Activated naive CD4-positive, alpha-beta T cell treated with anti-CD3 and anti-CD28 coated beads for 36 hours (primary cell): ENCODE measurements at regions of chr15 and their contacts with region 1.

Region 1: GRCh38 chr15:89057504-89058133 is 30.6 kb upstream of the ABHD2 start:
- DNase-seq: peak; percentile 91
- H3K4me3 Mint-ChIP-seq: no peak overlapping the region
- H3K27ac Mint-ChIP-seq: no peak overlapping the region
- H3K4me1 Mint-ChIP-seq: peaks cover 11% of the 10 kb centered on the region
- H3K27me3 Mint-ChIP-seq: no peaks in the 10 kb centered on the region

Region 2: GRCh38 chr15:89071466-89071865 is 13.8 kb after region 1 on chr15:
- CTCF ChIA-PET with region 1: interaction called, 11 read pairs
- intact Hi-C with region 1: no loop called
- DNase-seq: no peak
- H3K4me3 Mint-ChIP-seq: no peak overlapping the region
- H3K27ac Mint-ChIP-seq: no peak overlapping the region
- H3K4me1 Mint-ChIP-seq: peaks cover 24% of the 10 kb centered on the region
- H3K27me3 Mint-ChIP-seq: no peaks in the 10 kb centered on the region

Region 3: GRCh38 chr15:89096664-89097063 is 39.0 kb after region 1 on chr15:
- CTCF ChIA-PET with region 1: interaction called, 75 read pairs
- intact Hi-C with region 1: no loop called
- DNase-seq: no peak
- H3K4me3 Mint-ChIP-seq: no peak overlapping the region
- H3K27ac Mint-ChIP-seq: no peak overlapping the region
- H3K4me1 Mint-ChIP-seq: peaks cover 45% of the 10 kb centered on the region
- H3K27me3 Mint-ChIP-seq: no peaks in the 10 kb centered on the region

Region 4: DNA sequence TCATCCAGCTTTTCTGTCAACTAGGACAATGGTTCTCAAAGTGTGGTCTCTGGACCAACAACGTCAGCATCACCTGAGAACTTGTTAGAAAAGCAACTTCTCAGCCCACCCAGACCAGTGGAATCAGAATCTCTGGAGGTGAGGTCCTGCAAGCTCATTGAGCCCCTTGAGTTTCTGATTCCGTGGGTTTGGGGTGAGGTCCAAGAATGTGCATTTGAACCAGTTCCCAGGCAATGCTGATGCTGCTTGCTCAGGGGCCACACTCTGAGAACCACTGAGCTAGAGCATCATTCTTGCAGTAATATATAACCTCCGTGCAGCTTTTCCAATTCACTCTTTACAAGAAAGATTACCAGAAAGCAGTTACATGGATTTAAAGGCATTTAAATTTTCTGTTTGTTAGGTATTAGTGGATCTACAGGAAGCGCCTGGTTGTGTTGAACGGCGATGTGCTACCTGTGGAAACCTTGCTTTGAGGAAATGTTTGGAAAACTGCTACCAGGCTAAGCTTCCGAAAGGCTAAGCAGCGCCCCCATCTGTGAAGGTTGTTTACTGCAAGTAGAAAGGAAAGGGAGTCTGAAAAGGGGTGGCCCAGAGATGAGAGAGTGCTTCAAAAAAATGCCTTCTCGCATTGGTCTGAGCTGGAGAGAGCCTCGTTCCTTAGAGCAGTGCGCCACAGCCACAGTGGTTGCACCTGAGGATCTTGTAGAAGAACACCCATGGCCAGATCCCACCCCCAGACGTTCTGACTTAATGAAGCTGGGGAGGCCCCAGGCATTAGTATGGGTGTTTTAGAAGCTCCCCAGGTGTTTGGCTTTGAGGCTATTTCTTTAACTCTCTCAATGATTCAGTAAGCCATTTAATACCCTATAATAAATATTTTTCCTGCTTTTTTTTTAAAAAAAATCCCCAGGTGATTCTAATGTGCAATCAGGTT is 113.8 kb after region 1 on chr15:
- CTCF ChIA-PET with region 1: interaction called, 105 read pairs
- intact Hi-C with region 1: no loop called
- DNase-seq: peak; percentile 68
- H3K4me3 Mint-ChIP-seq: no peak overlapping the region
- H3K27ac Mint-ChIP-seq: no peak overlapping the region
- H3K4me1 Mint-ChIP-seq: peaks cover 33% of the 10 kb centered on the region
- H3K27me3 Mint-ChIP-seq: no peaks in the 10 kb centered on the region

Region 5: DNA sequence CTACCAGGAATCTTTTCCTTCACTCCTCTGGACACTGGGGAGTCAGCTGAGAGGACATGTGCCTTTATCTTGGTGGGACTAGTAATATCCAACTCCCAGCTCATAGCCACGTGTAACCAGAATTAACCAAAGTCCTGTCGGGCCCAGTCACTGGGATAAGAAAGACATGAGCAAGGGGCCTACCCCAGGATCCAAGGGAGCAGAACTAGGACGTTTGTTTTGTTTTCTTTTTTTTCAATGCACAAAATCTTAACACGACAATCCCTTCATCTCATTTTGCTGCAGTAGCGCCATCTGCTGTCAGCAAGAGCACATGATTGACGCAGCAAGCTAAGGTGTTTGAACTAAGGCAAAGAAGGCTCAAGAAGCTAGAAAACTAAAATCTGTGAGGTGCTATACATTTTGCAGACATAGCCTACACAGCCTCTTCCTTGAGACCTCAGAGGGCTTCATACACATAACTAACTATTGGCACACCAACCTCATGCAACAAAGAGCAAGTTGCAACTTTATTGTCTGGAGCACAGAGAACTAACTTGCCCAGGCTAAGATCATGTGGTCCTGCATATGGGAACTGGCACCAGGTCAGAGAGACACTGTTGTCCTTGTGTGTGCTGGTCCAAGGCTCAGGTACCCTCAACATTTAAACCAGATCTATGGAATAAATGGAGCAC is 120.2 kb after region 1 on chr15:
- CTCF ChIA-PET with region 1: interaction called, 105 read pairs
- intact Hi-C with region 1: loop called (anchors 1 kb)
- DNase-seq: peak; percentile 86
- H3K4me3 Mint-ChIP-seq: no peak overlapping the region
- H3K27ac Mint-ChIP-seq: peak overlapping the region; percentile 94
- H3K4me1 Mint-ChIP-seq: peaks cover 46% of the 10 kb centered on the region
- H3K27me3 Mint-ChIP-seq: no peaks in the 10 kb centered on the region

Region 6: DNA sequence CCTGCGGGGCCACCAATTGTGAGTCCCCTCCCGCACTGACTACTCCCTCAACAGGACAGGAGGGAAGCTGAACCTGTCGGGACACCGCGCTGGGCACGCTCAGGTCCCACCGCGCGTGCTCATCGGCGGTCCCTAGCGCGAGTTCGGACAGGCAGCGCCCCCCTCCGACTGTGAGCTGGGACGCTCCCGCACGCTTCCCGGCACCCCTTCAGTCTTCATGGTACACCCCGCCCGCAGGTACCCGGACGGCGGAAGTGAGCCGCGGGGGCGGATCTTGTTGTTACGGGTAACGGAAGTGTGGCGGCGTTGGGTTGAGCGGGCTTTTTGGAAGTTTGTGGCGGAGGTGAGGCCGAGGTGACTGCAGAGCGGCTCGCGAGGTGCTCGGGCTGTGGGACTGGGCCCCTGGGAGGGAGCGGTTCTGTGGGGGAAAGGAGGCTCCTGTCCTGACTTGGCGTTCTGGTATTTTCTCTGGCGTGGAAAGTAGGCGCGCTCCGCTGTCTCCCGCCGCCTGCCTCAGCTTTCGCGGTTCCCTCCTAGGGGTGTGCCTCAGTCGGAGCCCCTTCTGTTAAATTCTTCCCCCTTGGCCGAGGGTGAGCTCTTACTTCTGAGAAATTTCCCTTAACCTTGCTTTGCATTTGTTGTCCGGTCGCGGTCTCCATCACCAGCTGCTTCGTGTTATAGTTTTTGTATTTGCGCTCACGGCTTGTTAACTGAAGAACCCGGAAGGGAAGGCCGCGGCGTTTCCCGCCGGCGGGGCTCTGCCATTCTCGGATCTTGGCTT is 186.3 kb after region 1 on chr15 and contains the start of gene FANCI:
- CTCF ChIA-PET with region 1: interaction called, 11 read pairs
- intact Hi-C with region 1: loop called (anchors 2 kb)
- DNase-seq: peak; percentile 99
- H3K4me3 Mint-ChIP-seq: peak within 1 kb of the TSS; percentile 98
- H3K27ac Mint-ChIP-seq: peak within 1 kb of the TSS; percentile 93
- H3K4me1 Mint-ChIP-seq: peaks cover 31% of the 10 kb centered on the region
- H3K27me3 Mint-ChIP-seq: no peaks in the 10 kb centered on the region
- total RNA-seq, gene FANCI: 268 to 283 TPM